ENCODE measurements at regions of chr6 and their contacts with region 1.

Region 1: DNA sequence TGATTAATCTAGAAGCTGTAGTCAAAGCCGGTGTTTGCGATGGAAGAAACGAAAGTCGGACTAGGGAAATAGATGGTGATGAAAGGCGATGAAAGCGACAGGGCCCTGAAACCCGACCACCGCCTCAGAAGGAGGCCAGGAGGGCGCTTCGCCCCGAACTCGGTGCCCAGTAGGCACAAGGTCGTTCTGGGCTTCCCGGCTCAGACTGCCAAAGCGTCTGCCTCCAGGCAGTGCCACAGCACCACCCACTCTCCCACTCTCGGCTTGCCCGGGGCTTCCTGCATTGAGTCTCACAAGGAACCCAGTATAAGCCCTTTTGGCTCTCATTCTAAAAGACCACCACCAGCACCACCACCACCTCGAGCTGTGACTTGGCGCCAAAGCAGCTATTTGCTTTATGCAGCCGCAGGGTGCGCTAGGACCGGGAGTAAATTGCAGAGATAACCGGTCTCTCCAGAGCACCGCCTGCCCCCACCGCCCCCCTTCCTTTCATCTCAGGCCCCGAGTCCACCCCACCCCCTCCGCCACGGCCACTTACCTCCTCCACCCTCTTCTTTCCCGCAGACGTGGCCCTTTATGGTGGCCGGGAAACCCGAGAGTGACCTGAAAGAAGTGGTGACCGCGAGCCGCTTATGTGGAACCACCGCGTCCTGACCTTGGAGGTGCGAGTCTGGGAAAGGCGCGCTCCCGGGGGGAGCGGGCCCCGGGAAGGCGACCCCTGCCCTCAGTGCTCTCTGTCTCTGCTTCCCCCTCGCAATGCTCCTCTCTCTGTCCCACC is 2.4 kb downstream of the TCF21 start:
- DNase-seq: peak; percentile 40
- H3K4me3 Mint-ChIP-seq: peak overlapping the region; percentile 54
- H3K27ac Mint-ChIP-seq: no peak overlapping the region
- H3K4me1 Mint-ChIP-seq: peaks cover 40% of the 10 kb centered on the region
- H3K27me3 Mint-ChIP-seq: peaks cover 80% of the 10 kb centered on the region

Region 2: DNA sequence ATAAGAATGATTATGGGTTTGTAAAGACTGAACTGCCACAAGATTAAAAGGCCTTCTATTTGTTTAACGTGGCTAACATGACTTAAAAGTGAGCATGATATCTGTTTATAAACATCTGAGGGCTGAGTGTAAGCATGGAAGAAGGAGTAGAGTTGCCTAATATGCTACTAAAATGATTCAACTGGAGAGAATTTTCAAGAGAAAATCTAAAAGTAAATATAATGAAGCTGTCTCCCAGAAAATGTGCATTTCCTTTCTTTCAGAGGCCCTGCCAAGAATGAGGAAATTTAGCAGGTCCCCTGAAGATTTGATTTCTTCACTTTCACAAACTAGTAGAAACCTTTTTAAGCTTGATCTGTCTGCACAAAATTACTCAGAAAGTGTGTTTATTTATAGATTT is 654.4 kb before region 1 on chr6:
- CTCF ChIA-PET with region 1: no interaction called
- POLR2A ChIA-PET with region 1: no interaction called
- intact Hi-C with region 1: loop called (anchors 5 kb)
- DNase-seq: no peak
- H3K4me3 Mint-ChIP-seq: no peak overlapping the region
- H3K27ac Mint-ChIP-seq: no peak overlapping the region
- H3K4me1 Mint-ChIP-seq: no peaks in the 10 kb centered on the region
- H3K27me3 Mint-ChIP-seq: peaks cover 19% of the 10 kb centered on the region

Region 3: DNA sequence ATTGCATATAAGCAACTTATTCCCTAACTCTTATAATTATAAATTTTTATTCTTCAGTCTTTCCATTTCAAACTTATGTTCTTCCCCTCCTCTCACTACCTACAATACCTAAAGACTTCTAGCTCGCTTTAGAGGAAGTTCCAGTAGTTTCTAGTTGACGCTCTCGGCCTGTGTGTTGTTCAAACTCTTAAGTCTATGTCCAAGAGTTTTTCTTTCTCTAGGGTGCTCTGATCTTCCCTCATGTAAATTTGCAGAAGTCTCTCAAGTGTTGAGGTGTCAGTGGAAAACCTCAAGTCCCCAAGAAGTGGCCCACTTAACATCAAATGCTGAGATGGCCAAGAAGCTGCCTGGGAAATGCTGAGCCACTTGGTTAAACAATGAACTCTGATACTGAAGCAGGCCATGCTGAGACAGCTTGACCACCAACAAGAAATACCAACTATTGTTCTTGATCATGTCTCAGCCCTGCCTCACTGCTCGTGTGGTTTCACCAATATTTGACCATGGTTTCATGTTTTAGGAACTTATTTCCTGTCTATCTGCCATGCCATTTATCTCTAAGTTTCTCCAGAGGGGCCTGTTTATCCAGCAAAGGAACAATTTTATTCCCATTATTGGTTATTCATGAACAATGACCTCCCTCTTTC is 103.4 kb before region 1 on chr6:
- CTCF ChIA-PET with region 1: no interaction called
- POLR2A ChIA-PET with region 1: no interaction called
- intact Hi-C with region 1: no loop called
- DNase-seq: no peak
- H3K4me3 Mint-ChIP-seq: no peak overlapping the region
- H3K27ac Mint-ChIP-seq: no peak overlapping the region
- H3K4me1 Mint-ChIP-seq: no peaks in the 10 kb centered on the region
- H3K27me3 Mint-ChIP-seq: peaks cover 12% of the 10 kb centered on the region

Region 4: GRCh38 chr6:133854364-133855275 is 36.7 kb before region 1 on chr6:
- CTCF ChIA-PET with region 1: no interaction called
- POLR2A ChIA-PET with region 1: no interaction called
- intact Hi-C with region 1: loop called (anchors 2 kb)
- DNase-seq: peak; percentile 11
- H3K4me3 Mint-ChIP-seq: no peak overlapping the region
- H3K27ac Mint-ChIP-seq: no peak overlapping the region
- H3K4me1 Mint-ChIP-seq: peaks cover 16% of the 10 kb centered on the region
- H3K27me3 Mint-ChIP-seq: peaks cover 49% of the 10 kb centered on the region

Measured in activated CD4-positive, alpha-beta memory T cell treated with anti-CD3 and anti-CD28 coated beads for 36 hours (primary cell).